Heart right ventricle (tissue), 16 donors: ENCODE measurements at regions of chr14 and their contacts with region 1.

Region 1: DNA sequence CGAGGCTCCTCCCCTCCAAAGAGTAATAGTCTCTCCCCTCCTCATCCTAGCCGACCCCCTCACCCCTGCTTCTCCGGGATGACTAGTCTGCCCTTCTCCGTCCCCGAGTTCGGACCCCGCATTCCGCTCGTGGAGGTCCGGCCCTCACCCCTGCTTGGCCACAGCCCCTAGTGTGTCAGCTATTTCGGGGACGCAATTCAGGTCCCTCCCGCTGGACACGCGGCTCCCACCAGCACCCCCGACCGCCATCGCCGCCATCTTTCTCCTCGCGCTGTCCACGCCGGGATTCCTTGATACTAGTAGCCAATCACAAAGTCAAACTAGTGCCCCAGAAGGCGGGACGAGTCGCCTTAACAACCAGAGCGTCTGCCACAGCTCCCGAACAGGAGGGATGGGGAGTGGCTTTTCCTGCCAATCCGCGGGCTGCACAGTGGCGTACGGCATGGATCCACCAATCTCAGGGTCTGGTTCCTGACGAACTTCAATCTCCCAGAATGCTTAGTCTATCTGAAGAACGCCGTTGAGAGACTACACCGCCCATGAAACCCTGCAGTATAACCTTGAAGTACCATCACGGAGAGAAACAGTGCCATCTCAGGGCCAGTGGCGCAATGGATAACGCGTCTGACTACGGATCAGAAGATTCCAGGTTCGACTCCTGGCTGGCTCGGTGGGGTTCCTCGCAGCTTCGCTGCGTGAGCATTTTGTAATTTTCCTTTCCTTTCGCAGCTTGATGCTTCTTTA is at the start of gene PRMT5:
- DNase-seq: peak; percentile 97 to 100
- ATAC-seq: peak; percentile 97 to 99 (median 98)
- H3K4me3 ChIP-seq: peak within 1 kb of the TSS; percentile 69 to 98 (median 77)
- H3K27ac ChIP-seq: peak within 1 kb of the TSS; percentile 49 to 92 (median 81)
- H3K4me1 ChIP-seq: peaks cover 4 to 25% (median 14%) of the 10 kb centered on the region in 9 donors
- H3K27me3 ChIP-seq: no peaks in the 10 kb centered on the region
- CTCF ChIP-seq: no peak
- total RNA-seq, gene PRMT5: 41.5 to 52.6 (median 48.2) TPM

Region 2: GRCh38 chr14:22796087-22796707 is 133.1 kb before region 1 on chr14:
- intact Hi-C with region 1: no loop called
- DNase-seq: no peak
- ATAC-seq: no peak
- H3K4me3 ChIP-seq: no peak overlapping the region
- H3K27ac ChIP-seq: no peak overlapping the region
- H3K4me1 ChIP-seq: peaks cover 0 to 38% (median 2%) of the 10 kb centered on the region in 9 donors
- H3K27me3 ChIP-seq: no peaks in the 10 kb centered on the region
- CTCF ChIP-seq: no peak

Region 3: GRCh38 chr14:22918804-22919600 is 10.3 kb before region 1 on chr14 and contains the start of gene RBM23:
- intact Hi-C with region 1: loop called in 2 of 10 experiments (anchors 1 kb)
- DNase-seq: peak; percentile 99 to 100
- ATAC-seq: peak; percentile 91 to 97 (median 95)
- H3K4me3 ChIP-seq: peak within 1 kb of the TSS; percentile 58 to 97 (median 80)
- H3K27ac ChIP-seq: peak within 1 kb of the TSS; percentile 91 to 99 (median 97)
- H3K4me1 ChIP-seq: peaks cover 7 to 52% (median 35%) of the 10 kb centered on the region in 9 donors
- H3K27me3 ChIP-seq: no peaks in the 10 kb centered on the region
- CTCF ChIP-seq: peak in 1 of 9 donors; percentile 9
- total RNA-seq, gene RBM23: 27.8 to 58.1 (median 36.1) TPM

Region 4: GRCh38 chr14:22955702-22956569 is 26.7 kb after region 1 on chr14:
- intact Hi-C with region 1: loop called in 1 of 10 experiments (anchors 2 kb)
- DNase-seq: no peak
- ATAC-seq: no peak
- H3K4me3 ChIP-seq: peak overlapping the region; percentile 60 to 82 (median 72)
- H3K27ac ChIP-seq: peak overlapping the region; percentile 75 to 97 (median 94)
- H3K4me1 ChIP-seq: peaks cover 4 to 18% (median 12%) of the 10 kb centered on the region in 9 donors
- H3K27me3 ChIP-seq: no peaks in the 10 kb centered on the region
- CTCF ChIP-seq: no peak

Region 5: DNA sequence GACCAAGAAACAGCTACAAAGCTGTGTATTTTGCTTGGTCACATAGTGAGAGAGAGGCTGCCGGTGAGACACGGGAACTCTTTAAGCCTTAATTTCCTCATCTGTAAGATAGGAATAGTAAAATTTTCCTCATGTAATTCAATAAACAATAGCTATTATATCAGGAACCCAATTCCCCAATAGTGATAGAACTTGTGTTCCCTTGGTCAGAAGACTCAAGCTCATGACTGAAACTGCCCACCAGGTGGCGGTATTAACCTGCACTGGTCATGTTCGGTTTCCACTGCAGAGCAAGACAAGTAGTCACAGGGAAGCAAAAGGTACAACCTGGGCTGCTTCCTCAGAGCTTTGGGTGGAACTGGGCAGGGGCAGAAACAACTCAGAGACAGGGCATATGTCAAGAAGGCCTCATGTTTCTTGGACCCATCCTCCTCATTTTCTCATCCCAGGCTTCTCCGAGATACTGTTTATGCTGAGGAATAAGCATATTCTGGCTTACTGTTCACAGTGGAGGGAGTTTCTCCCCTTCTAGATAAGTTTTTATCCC is 57.3 kb after region 1 on chr14:
- intact Hi-C with region 1: loop called in 3 of 10 experiments (anchors 1 to 10 kb)
- DNase-seq: peak; percentile 77 to 90
- ATAC-seq: peak in 7 of 8 donors; percentile 14 to 52 (median 33)
- H3K4me3 ChIP-seq: no peak overlapping the region
- H3K27ac ChIP-seq: no peak overlapping the region
- H3K4me1 ChIP-seq: peaks cover 0 to 24% (median 14%) of the 10 kb centered on the region in 9 donors
- H3K27me3 ChIP-seq: peaks cover 0 to 7% (median 0%) of the 10 kb centered on the region in 7 donors
- CTCF ChIP-seq: peak; percentile 78 to 96 (median 92)

Region 6: DNA sequence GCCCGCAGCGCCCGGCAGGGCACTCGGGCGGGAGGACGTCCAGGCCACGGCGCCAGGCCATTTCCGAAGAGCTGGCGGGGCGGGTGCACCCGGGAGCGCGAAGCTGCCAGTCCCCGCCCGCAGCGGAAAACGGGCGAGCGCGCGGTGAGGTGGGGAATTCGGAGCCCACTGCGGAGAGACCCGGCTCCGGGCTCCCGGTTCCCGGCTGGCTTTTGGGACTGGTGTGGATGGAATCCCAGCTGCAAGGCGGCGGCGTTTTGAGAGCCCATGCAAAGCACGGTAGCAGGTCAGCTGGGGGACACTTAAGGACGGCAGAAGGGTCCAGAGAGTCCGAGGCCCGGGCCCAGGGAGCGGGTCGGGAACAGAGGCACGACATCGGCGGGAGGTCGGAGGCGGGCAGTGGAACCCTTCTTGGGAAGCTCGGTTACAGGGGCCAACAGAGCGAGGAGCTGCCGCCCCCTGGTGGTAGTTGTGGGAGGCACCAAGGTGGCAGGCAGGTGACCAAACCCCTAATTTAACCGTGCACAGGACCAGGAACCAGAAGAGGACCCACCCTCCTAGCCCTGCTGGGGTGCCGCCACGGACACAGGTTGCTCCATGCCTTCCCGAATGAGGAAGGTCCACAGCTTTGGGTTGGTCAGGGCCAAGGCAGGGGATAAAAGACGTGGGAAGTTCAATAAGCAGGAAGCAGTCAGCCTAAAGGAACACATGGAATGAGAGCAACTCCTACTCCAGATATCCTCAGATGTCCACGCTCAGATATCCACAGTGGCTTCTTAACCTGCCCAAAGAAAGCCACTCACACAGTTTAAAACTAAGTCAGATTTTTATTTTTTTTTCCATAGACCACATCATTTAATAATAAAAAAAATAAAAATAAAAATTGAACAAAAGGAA is 128.7 kb after region 1 on chr14:
- intact Hi-C with region 1: loop called in 1 of 10 experiments (anchors 1 kb)
- DNase-seq: peak; percentile 88
- ATAC-seq: peak; percentile 63 to 84 (median 80)
- H3K4me3 ChIP-seq: peak overlapping the region; percentile 48 to 91 (median 72)
- H3K27ac ChIP-seq: peak overlapping the region in 8 of 10 donors; percentile 39 to 68 (median 54)
- H3K4me1 ChIP-seq: peaks cover 5 to 41% (median 25%) of the 10 kb centered on the region in 9 donors
- H3K27me3 ChIP-seq: no peaks in the 10 kb centered on the region
- CTCF ChIP-seq: peak; percentile 94 to 98 (median 96)

Region 7: DNA sequence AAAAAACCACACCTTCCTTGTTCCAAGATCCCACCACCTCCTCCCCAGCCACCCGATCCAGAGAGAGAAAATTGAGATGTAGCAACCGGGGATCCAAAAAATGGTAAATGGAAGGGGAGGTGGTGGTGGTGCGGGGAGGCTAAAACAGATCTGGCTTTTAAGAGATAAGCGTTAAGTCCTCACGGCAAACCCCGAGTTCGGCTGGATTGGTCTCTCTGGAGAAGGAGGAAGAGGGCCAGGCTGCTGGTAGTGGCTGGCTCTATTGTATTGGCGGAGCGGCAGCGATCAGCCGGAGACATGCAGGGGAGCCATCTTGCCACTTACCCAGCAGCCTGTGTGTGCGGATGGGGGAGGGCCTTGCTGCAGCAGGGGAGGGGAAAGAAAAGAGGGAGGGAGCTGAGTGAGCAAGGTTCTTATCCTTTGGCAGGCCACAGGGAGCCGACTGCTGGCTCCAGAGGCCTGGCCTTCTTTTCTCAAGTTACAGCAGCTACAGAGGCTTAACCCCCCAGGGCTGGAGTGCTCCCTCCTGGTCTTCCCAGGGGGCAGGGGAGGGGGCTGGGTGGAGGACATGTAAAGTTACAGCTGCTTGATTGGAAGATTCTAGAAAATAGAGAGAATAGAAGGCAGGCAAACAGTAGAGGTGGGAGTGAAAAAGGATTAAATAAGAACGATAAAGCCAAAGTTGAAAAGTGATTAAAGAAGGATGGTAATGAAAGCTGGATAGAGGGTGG is 142.1 kb after region 1 on chr14:
- intact Hi-C with region 1: no loop called
- DNase-seq: peak; percentile 79 to 87
- ATAC-seq: peak; percentile 88 to 95 (median 94)
- H3K4me3 ChIP-seq: peak overlapping the region; percentile 46 to 70 (median 63)
- H3K27ac ChIP-seq: peak overlapping the region; percentile 37 to 88 (median 84)
- H3K4me1 ChIP-seq: peaks cover 15 to 47% (median 42%) of the 10 kb centered on the region in 9 donors
- H3K27me3 ChIP-seq: no peaks in the 10 kb centered on the region
- CTCF ChIP-seq: no peak